Activated CD4-positive, alpha-beta T cell treated with anti-CD3 and anti-CD28 coated beads, Interleukin-2, amount 10 ng/mL, durations not matched to agents 24 days and 14 days (primary cell): ENCODE measurements at regions of chr18 and their contacts with region 1.

Region 1: DNA sequence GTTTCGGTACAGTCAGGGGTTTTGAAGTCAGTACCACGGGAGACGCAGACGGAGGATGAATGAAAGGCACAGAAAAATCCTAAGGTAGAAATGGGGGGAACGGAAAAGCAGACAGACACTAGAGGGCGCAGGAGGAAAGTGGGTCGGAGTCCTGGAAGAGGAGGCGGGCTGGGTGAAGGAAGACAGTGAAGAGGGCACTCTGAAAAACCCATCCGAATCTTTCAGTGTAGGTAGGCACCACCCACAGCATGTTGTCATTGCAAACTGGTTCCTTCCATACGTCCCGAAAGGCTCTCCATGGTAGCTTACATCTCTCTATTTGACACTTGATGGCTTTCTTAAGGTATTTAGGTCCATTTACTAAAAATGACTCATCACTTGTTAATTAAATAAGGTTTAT is 18.5 kb upstream of the ZNF236 start:
- DNase-seq: peak; percentile 91
- H3K4me3 Mint-ChIP-seq: peak overlapping the region; percentile 20
- H3K27ac Mint-ChIP-seq: peak overlapping the region; percentile 27
- H3K4me1 Mint-ChIP-seq: peaks cover 7% of the 10 kb centered on the region
- H3K27me3 Mint-ChIP-seq: peaks cover 14% of the 10 kb centered on the region

Region 2: GRCh38 chr18:76658627-76659026 is 145.2 kb before region 1 on chr18:
- intact Hi-C with region 1: no loop called
- DNase-seq: peak; percentile 57
- H3K4me3 Mint-ChIP-seq: no peak overlapping the region
- H3K27ac Mint-ChIP-seq: no peak overlapping the region
- H3K4me1 Mint-ChIP-seq: peaks cover 13% of the 10 kb centered on the region
- H3K27me3 Mint-ChIP-seq: peaks cover 32% of the 10 kb centered on the region

Region 3: DNA sequence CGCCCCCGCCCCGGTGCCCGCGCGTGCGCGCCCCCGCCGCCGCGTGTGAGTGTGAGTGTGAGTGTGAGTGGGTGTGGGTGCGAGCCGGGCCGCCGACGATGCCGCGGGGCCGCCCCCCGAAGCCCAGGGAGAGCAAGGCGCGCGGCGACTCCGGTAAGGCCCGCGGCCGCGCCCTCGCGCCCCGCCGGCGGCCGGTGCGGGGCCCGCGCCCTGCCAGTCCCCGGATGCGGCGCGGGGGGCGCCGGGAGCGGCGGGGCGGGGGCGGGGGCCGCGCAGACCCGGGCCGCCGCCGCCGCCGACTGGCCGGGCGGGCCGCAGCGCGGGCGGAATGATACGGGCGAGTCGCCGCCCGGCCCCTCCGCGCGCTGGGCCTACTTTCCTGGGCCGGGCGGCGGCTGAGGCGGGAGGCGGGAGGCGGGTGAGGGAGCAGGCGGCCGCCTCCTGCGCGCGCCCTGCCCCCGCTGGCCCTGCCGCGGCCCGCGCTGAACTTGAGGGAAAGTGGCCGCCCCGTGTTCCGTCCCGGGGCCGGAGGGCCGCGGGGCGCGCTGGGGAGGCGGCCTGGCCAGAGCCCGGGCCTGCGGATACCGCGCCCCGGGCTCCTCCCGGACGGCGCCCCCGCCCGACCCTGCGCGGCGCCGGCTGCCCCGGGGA is 18.8 kb after region 1 on chr18 and contains the start of gene ZNF236:
- intact Hi-C with region 1: loop called (anchors 1 kb)
- DNase-seq: peak; percentile 90
- H3K4me3 Mint-ChIP-seq: peak within 1 kb of the TSS; percentile 95
- H3K27ac Mint-ChIP-seq: peak within 1 kb of the TSS; percentile 95
- H3K4me1 Mint-ChIP-seq: peaks cover 43% of the 10 kb centered on the region
- H3K27me3 Mint-ChIP-seq: no peaks in the 10 kb centered on the region
- total RNA-seq, gene ZNF236: 17.5 and 22.0 TPM in 2 replicates

Region 4: GRCh38 chr18:76875390-76876325 is 71.8 kb after region 1 on chr18:
- intact Hi-C with region 1: loop called (anchors 1 kb)
- DNase-seq: peak; percentile 84
- H3K4me3 Mint-ChIP-seq: no peak overlapping the region
- H3K27ac Mint-ChIP-seq: peak overlapping the region; percentile 22
- H3K4me1 Mint-ChIP-seq: peaks cover 13% of the 10 kb centered on the region
- H3K27me3 Mint-ChIP-seq: no peaks in the 10 kb centered on the region

Region 5: DNA sequence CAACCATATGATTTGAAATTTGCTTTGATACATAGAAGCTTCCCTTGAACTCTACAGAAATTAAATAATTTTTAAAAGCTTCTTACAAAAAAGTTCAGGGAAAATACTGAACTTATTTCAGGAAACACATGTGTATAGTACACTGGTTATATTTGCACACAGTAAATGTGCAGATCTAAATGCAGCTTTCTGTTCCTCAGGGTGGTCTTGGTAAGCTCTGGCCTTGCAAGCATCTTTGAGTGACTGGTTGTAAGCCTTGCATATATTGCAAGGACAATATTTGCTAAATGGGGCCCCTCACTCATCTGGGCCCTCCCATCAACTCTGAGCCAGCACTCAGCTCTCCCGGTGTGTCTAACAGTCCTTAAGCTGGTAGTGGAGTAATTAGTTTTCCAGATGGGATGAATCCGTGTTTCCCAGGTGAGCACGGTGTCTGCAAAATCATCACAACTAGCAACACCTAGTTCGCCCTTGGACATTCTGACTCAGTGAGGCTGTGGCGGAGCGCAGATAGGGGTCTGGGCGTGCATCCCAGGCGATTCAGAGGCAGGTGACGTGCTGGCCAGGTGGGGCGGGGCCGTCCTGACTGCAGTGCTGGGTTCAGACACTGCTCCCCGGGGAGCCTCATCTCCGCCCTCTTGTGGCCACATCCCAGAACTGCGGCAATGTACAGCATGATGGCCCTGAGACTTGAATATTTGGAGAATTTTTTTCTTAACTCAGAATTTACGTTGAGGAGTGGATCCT is 179.2 kb after region 1 on chr18:
- intact Hi-C with region 1: loop called (anchors 1 kb)
- DNase-seq: peak; percentile 96
- H3K4me3 Mint-ChIP-seq: no peak overlapping the region
- H3K27ac Mint-ChIP-seq: no peak overlapping the region
- H3K4me1 Mint-ChIP-seq: peaks cover 4% of the 10 kb centered on the region
- H3K27me3 Mint-ChIP-seq: no peaks in the 10 kb centered on the region

Region 6: GRCh38 chr18:77650799-77651385 is 847.1 kb after region 1 on chr18:
- intact Hi-C with region 1: loop called (anchors 5 kb)
- DNase-seq: peak; percentile 91
- H3K4me3 Mint-ChIP-seq: no peak overlapping the region
- H3K27ac Mint-ChIP-seq: no peak overlapping the region
- H3K4me1 Mint-ChIP-seq: peaks cover 2% of the 10 kb centered on the region
- H3K27me3 Mint-ChIP-seq: peaks cover 4% of the 10 kb centered on the region